ENCODE measurements at regions of chr2 and their contacts with region 1.

Region 1: GRCh38 chr2:54471221-54471711 is 15.1 kb downstream of the SPTBN1 start:
- DNase-seq: peak; percentile 81
- ATAC-seq: no peak
- H3K4me3 ChIP-seq: no peak overlapping the region
- H3K27ac ChIP-seq: no peak overlapping the region
- H3K4me1 ChIP-seq: peaks cover 19% of the 10 kb centered on the region
- H3K27me3 ChIP-seq: no peaks in the 10 kb centered on the region
- CTCF ChIP-seq: no peak
- POLR2A ChIP-seq: no peak
- RAD21 ChIP-seq: no peak

Region 2: GRCh38 chr2:54295911-54296310 is 175.4 kb before region 1 on chr2:
- CTCF ChIA-PET with region 1: no interaction called
- POLR2A ChIA-PET with region 1: interaction called, 12 read pairs
- dilution Hi-C with region 1: no loop called
- in situ Hi-C with region 1: no loop called
- intact Hi-C with region 1: no loop called
- DNase-seq: no peak
- ATAC-seq: peak; percentile 66
- H3K4me3 ChIP-seq: no peak overlapping the region
- H3K27ac ChIP-seq: no peak overlapping the region
- H3K4me1 ChIP-seq: peaks cover 2% of the 10 kb centered on the region; the same call in 1 of the 2 replicates
- H3K27me3 ChIP-seq: peaks cover 2% of the 10 kb centered on the region; the same call in 1 of the 2 replicates
- CTCF ChIP-seq: no peak
- POLR2A ChIP-seq: no peak
- RAD21 ChIP-seq: no peak

Region 3: DNA sequence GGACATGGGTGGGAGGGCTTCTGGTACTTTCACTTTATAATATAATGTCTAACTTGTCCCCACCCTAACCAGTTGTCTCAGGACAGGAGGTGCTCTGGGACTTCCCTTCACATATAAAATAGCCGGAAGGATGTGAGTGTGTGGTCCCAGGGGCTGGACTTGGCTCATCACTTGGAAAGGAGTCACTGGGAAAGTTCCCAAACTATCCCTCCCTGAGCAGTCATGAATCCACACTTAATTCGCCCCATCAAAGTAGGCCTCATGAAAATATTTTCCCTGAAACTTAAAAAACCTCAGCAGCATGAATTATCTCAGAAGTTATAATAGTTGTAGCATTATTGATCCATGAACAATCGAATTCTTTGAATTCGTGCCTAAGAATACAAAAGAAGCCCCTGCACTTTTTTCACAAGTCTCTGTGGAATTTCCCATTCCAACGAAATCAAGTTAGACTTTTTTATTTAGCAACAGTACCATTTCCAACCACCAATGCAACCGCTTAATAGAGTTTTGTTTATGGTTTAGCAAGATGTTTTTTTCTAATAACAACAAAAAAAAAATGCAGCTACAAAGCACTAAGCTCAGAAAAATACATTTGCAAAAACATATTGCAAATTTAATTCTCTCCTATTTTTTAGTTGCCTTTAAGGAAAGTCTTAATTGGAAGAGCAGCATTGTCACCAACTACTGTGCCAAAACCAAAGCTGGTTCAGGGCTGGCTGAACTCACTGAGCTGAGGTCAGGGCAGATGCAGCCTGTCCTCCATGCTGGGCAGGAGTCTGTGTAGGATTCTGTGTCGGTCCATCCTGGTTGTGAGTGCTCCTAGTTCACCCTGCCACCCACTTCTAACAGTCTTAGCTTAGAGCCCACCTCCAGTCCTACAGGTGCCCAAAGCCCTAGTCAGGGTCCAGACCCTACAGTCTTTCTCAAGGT is 83.9 kb before region 1 on chr2:
- CTCF ChIA-PET with region 1: no interaction called
- POLR2A ChIA-PET with region 1: no interaction called
- dilution Hi-C with region 1: no loop called
- in situ Hi-C with region 1: no loop called
- intact Hi-C with region 1: no loop called
- DNase-seq: peak; percentile 63
- ATAC-seq: no peak
- H3K4me3 ChIP-seq: no peak overlapping the region
- H3K27ac ChIP-seq: no peak overlapping the region
- H3K4me1 ChIP-seq: no peaks in the 10 kb centered on the region
- H3K27me3 ChIP-seq: no peaks in the 10 kb centered on the region
- CTCF ChIP-seq: no peak
- POLR2A ChIP-seq: no peak
- RAD21 ChIP-seq: no peak

Region 4: GRCh38 chr2:54512663-54513362 is 41.5 kb after region 1 on chr2:
- CTCF ChIA-PET with region 1: no interaction called
- POLR2A ChIA-PET with region 1: no interaction called
- dilution Hi-C with region 1: no loop called
- in situ Hi-C with region 1: no loop called
- intact Hi-C with region 1: loop called (anchors 5 kb)
- DNase-seq: no peak
- ATAC-seq: no peak
- H3K4me3 ChIP-seq: no peak overlapping the region
- H3K27ac ChIP-seq: no peak overlapping the region
- H3K4me1 ChIP-seq: peaks cover 5% of the 10 kb centered on the region
- H3K27me3 ChIP-seq: no peaks in the 10 kb centered on the region
- CTCF ChIP-seq: no peak
- POLR2A ChIP-seq: no peak
- RAD21 ChIP-seq: no peak

Measured in IMR-90 (cell line).